Ascending aorta (tissue), 2 donors: ENCODE measurements at regions of chr2 and their contacts with region 1.

Region 1: GRCh38 chr2:119862127-119862889 is 102.6 kb downstream of the PTPN4 start:
- DNase-seq: no peak
- H3K4me3 ChIP-seq: no peak overlapping the region
- H3K27ac ChIP-seq: no peak overlapping the region
- H3K4me1 ChIP-seq: no peaks in the 10 kb centered on the region
- H3K27me3 ChIP-seq: no peaks in the 10 kb centered on the region
- CTCF ChIP-seq: no peak

Region 2: DNA sequence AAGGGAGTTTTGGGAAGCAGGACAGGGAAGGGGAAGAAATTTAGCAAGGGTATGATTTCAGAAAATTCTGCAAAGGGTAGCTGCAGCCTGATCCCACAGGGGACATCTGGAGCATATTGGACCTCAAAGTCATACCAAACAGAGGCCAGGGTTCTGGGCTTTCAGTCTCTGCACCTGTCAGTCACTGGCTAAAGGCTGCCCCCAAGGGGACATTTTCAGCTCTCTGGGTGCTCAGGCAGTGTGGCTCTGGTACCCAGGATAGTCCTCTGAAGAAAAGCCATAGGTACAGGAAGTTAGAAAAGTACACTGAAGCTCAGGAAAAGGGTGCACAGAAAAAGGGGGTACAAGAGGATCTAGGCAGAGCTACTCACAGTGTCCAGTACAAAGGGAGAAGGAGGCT is 1624.9 kb before region 1 on chr2:
- intact Hi-C with region 1: loop called (anchors 10 kb)
- DNase-seq: no peak
- H3K4me3 ChIP-seq: no peak overlapping the region
- H3K27ac ChIP-seq: no peak overlapping the region
- H3K4me1 ChIP-seq: no peaks in the 10 kb centered on the region
- H3K27me3 ChIP-seq: no peaks in the 10 kb centered on the region
- CTCF ChIP-seq: peak in 1 of 3 experiments; percentile 9